WTC11 (cell line): ENCODE measurements at regions of chr3 and their contacts with region 1.

Region 1: DNA sequence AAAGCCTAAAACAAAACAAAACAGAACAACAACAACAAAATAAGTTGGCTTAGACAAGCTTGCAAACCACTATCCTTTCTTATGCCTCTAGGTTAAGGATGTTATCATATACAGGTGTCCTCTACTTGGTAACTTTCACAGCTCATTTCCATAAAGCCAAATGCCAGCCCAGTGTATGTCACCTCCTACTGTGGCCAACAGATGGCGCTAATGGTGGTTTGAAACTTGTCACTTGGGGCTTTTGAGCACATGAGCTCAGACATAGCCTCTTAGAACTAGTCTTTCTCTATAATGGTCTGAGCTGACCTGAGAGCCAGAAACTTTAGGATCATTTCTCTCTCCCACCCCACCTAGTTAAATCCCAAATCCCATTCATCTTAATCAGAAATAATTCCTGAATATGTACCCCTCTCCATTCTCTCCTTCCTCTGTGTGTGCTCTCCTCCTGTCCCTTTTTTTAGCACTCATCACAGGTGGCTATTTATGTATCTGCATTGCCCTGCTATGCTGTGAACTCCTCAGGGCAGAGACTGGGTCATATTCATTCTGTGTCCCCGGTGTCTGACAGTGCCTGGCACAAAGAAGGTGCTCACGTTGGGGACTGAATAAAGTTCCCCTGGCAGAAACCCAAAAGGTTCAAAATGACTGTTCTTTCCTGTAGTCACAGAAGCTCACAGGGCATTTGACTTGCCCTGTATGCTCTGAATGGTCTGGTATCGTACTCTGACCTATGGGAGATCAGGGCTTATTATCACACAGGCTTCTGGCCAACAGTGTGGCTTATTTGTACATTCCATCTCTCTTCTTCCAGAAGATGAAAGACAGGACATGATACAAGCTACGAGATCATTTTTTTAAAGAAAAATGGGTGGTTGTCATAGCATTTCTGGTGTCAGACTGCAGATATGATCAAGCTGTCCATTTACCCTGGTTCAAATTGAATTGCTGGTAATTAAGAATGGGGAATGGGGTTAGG is 319.3 kb upstream of the AZI2 start:
- DNase-seq: peak; percentile 78
- ATAC-seq: peak; percentile 96
- H3K4me3 Mint-ChIP-seq: no peak overlapping the region
- H3K27ac Mint-ChIP-seq: no peak overlapping the region
- H3K4me1 Mint-ChIP-seq: peaks cover 24% of the 10 kb centered on the region
- H3K27me3 Mint-ChIP-seq: no peaks in the 10 kb centered on the region
- CTCF ChIP-seq: peak; percentile 75

Region 2: DNA sequence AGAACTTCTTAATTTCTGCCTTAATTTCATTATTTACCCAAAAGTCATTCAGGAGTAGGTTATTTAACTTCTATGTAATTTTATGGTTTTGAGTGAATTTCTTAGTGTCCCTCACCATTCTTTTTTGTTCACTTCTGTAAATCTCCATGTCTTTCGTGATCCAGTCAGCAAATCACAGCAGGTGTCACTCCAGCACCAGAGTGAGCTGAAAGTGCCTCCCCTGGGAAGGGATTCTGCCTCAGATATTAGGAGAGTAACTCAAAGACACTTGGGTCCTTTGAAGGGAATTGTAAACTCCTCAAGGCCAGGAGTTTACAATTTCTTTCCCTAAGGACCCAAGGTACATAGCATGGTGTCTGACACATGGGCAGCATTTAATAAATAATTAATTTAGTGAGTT is 111.7 kb before region 1 on chr3:
- CTCF ChIA-PET with region 1: interaction called, 10 read pairs
- POLR2A ChIA-PET with region 1: no interaction called
- DNase-seq: peak; percentile 12
- ATAC-seq: peak; percentile 62; the same call in 1 of the 2 replicates
- H3K4me3 Mint-ChIP-seq: no peak overlapping the region
- H3K27ac Mint-ChIP-seq: no peak overlapping the region
- H3K4me1 Mint-ChIP-seq: no peaks in the 10 kb centered on the region
- H3K27me3 Mint-ChIP-seq: no peaks in the 10 kb centered on the region
- CTCF ChIP-seq: no peak

Region 3: GRCh38 chr3:28575746-28576613 is 92.0 kb before region 1 on chr3:
- CTCF ChIA-PET with region 1: interaction called, 15 read pairs
- POLR2A ChIA-PET with region 1: interaction called, 3 read pairs
- DNase-seq: peak; percentile 52
- ATAC-seq: peak; percentile 56
- H3K4me3 Mint-ChIP-seq: peak overlapping the region; percentile 94
- H3K27ac Mint-ChIP-seq: no peak overlapping the region
- H3K4me1 Mint-ChIP-seq: peaks cover 63% of the 10 kb centered on the region
- H3K27me3 Mint-ChIP-seq: peaks cover 40% of the 10 kb centered on the region
- CTCF ChIP-seq: no peak

Region 4: GRCh38 chr3:28637742-28638141 is 30.2 kb before region 1 on chr3:
- CTCF ChIA-PET with region 1: interaction called, 14 read pairs
- POLR2A ChIA-PET with region 1: no interaction called
- DNase-seq: no peak
- ATAC-seq: no peak
- H3K4me3 Mint-ChIP-seq: no peak overlapping the region
- H3K27ac Mint-ChIP-seq: no peak overlapping the region
- H3K4me1 Mint-ChIP-seq: 0 out of 2 replicates have a peak, but pooled peaks cover 2% of the 10 kb centered on the region
- H3K27me3 Mint-ChIP-seq: no peaks in the 10 kb centered on the region
- CTCF ChIP-seq: no peak

Region 5: GRCh38 chr3:28651159-28651558 is 16.8 kb before region 1 on chr3:
- CTCF ChIA-PET with region 1: interaction called, 17 read pairs
- POLR2A ChIA-PET with region 1: no interaction called
- DNase-seq: no peak
- ATAC-seq: no peak
- H3K4me3 Mint-ChIP-seq: no peak overlapping the region
- H3K27ac Mint-ChIP-seq: no peak overlapping the region
- H3K4me1 Mint-ChIP-seq: peaks cover 10% of the 10 kb centered on the region
- H3K27me3 Mint-ChIP-seq: no peaks in the 10 kb centered on the region
- CTCF ChIP-seq: no peak

Region 6: GRCh38 chr3:28703843-28704242 is 35.9 kb after region 1 on chr3:
- CTCF ChIA-PET with region 1: interaction called, 20 read pairs
- POLR2A ChIA-PET with region 1: no interaction called
- DNase-seq: no peak
- ATAC-seq: peak; percentile 64
- H3K4me3 Mint-ChIP-seq: no peak overlapping the region
- H3K27ac Mint-ChIP-seq: no peak overlapping the region
- H3K4me1 Mint-ChIP-seq: peaks cover 18% of the 10 kb centered on the region
- H3K27me3 Mint-ChIP-seq: no peaks in the 10 kb centered on the region
- CTCF ChIP-seq: no peak

Region 7: GRCh38 chr3:28726840-28727239 is 58.9 kb after region 1 on chr3:
- CTCF ChIA-PET with region 1: interaction called, 26 read pairs
- POLR2A ChIA-PET with region 1: no interaction called
- DNase-seq: peak; percentile 75
- ATAC-seq: peak; percentile 99
- H3K4me3 Mint-ChIP-seq: no peak overlapping the region
- H3K27ac Mint-ChIP-seq: no peak overlapping the region
- H3K4me1 Mint-ChIP-seq: no peaks in the 10 kb centered on the region
- H3K27me3 Mint-ChIP-seq: no peaks in the 10 kb centered on the region; the same call in 1 of the 2 replicates
- CTCF ChIP-seq: peak; percentile 66